ENCODE measurements at regions of chr14 and their contacts with region 1.

Region 1: DNA sequence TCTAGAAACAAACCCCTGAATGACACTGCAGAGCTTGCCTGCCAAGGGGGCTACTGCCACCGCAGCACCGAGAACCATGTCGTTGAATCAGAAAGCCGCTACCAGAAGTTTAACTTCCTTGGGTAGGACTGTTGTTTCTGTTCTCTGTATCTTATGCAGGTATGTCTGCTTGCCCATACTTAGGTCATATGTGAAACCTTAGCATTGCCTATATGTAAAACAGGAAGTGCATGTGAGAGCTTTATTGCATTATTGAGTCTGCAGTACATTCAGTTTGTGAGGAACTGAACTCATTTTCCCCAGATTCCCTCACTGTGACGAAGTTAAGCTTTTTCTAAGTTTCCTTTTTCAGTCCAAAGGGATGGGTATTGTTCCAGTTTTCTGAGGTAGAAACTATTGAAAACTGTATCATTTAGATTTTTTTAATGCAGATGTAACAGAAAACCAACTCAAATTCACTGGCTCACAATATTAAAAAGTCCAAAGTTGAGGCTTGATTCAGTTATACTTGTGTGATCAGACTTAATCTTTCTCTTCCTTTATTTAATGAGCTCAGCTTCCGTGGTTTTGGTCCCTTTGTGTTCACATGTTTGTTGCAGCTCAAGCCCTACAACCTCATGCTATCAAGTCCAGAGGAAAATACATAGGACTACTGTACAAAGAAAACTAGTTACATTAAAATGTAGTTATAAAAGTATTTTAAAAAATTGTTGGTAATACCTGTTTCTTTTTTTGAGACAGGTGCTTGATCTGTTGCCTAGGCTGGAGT is 6.9 kb downstream of the FBXO34 start:
- DNase-seq: no peak
- ATAC-seq: peak; percentile 84
- H3K4me3 ChIP-seq: peak overlapping the region; percentile 38; the same call in 1 of the 2 replicates
- H3K27ac ChIP-seq: peak overlapping the region; percentile 84
- H3K4me1 ChIP-seq: peaks cover 46% of the 10 kb centered on the region
- H3K27me3 ChIP-seq: no peaks in the 10 kb centered on the region
- CTCF ChIP-seq: no peak
- EP300 ChIP-seq: no peak
- POLR2A ChIP-seq: no peak
- RAD21 ChIP-seq: no peak

Region 2: GRCh38 chr14:54676812-54677708 is 601.1 kb before region 1 on chr14:
- CTCF ChIA-PET with region 1: no interaction called
- POLR2A ChIA-PET with region 1: no interaction called
- RAD21 ChIA-PET with region 1: no interaction called
- SMC1A ChIA-PET with region 1: no interaction called
- in situ Hi-C with region 1: no loop called
- intact Hi-C with region 1: no loop called
- DNase-seq: no peak
- ATAC-seq: no peak
- H3K4me3 ChIP-seq: no peak overlapping the region
- H3K27ac ChIP-seq: no peak overlapping the region
- H3K4me1 ChIP-seq: peaks cover 14% of the 10 kb centered on the region
- H3K27me3 ChIP-seq: no peaks in the 10 kb centered on the region
- CTCF ChIP-seq: no peak
- EP300 ChIP-seq: no peak
- POLR2A ChIP-seq: no peak
- RAD21 ChIP-seq: no peak

Region 3: GRCh38 chr14:55294603-55295002 is 16.4 kb after region 1 on chr14:
- CTCF ChIA-PET with region 1: interaction called, 8 read pairs
- POLR2A ChIA-PET with region 1: interaction called, 12 read pairs
- RAD21 ChIA-PET with region 1: interaction called, 5 read pairs
- SMC1A ChIA-PET with region 1: interaction called, 7 read pairs
- in situ Hi-C with region 1: no loop called
- intact Hi-C with region 1: no loop called
- DNase-seq: no peak
- ATAC-seq: peak; percentile 61
- H3K4me3 ChIP-seq: no peak overlapping the region
- H3K27ac ChIP-seq: no peak overlapping the region
- H3K4me1 ChIP-seq: peaks cover 17% of the 10 kb centered on the region
- H3K27me3 ChIP-seq: no peaks in the 10 kb centered on the region
- CTCF ChIP-seq: no peak
- EP300 ChIP-seq: no peak
- POLR2A ChIP-seq: no peak
- RAD21 ChIP-seq: no peak

Region 4: DNA sequence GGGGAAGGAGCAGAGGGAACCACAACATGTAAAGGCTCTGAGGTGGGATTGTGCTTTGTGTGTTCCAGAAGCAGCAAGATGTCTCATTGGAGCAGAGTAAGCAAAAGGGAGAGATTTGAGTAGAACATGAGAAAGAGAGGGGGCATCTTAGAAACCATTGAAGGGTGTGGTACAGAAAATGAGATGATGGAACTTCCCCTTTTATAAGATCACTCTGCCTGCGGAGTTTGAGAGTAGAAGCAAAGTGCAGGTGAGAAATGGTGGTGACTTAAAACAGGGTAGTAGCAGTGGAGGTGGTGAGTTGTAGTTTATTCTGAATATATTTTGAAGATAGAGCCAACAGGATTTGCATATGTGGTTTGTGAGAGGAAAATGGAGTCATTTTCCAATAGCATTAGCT is 49.0 kb after region 1 on chr14:
- CTCF ChIA-PET with region 1: interaction called, 14 read pairs
- POLR2A ChIA-PET with region 1: interaction called, 5 read pairs
- RAD21 ChIA-PET with region 1: interaction called, 20 read pairs
- SMC1A ChIA-PET with region 1: interaction called, 18 read pairs
- in situ Hi-C with region 1: no loop called
- intact Hi-C with region 1: loop called (anchors 2 kb)
- DNase-seq: no peak
- ATAC-seq: peak; percentile 94
- H3K4me3 ChIP-seq: no peak overlapping the region
- H3K27ac ChIP-seq: peak overlapping the region; percentile 25; the same call in 1 of the 2 replicates
- H3K4me1 ChIP-seq: peaks cover 26% of the 10 kb centered on the region
- H3K27me3 ChIP-seq: no peaks in the 10 kb centered on the region
- CTCF ChIP-seq: no peak
- EP300 ChIP-seq: no peak
- POLR2A ChIP-seq: no peak
- RAD21 ChIP-seq: no peak